ENCODE measurements at regions of chr11 and their contacts with region 1.

Region 1: DNA sequence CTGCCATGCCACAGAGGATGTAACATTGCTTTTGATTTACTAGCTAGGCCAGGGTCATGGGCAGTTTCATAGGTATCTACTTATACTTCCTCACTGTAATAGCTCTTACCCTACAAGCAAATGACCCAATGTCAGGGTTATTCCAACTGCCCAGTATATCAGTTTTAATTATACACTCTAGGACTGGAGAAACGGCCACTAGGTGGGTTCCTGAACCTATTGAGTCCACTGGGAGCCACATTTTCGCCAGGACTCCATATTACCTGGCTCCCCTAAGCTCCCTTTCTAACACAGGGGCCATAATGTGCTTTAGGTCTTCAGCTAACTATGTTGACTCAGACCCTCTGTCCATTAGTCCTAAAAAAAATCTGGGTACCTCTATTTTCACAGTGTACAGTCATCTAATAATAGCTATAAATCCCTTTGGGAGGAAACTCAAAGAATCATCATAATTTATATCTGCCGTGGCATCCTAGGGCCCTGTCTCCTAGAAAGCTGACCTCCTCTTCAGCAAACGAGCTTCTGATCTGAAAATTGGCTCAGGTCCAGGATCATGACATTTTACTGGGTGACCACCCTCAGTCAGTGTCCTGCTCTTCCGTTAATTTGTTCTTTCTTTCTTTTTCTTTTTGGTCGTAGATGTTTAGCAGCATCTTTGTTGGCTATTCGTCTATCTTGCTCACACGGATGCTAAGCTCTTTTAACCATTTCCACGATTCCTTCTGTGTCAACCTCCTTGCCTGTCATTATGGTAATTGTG is 244.3 kb downstream of the FAM76B start:
- DNase-seq: no peak
- H3K4me3 ChIP-seq: no peak overlapping the region
- H3K27ac ChIP-seq: no peak overlapping the region
- H3K4me1 ChIP-seq: no peaks in the 10 kb centered on the region
- H3K27me3 ChIP-seq: no peaks in the 10 kb centered on the region
- CTCF ChIP-seq: peak in 2 of 3 experiments; percentile 20 to 34; a peak in 2 of 4 replicates
- EP300 ChIP-seq: no peak
- POLR2A ChIP-seq: no peak
- RAD21 ChIP-seq: peak; percentile 21 to 47; a peak in 3 of 4 replicates

Region 2: GRCh38 chr11:95556342-95557163 is 11.3 kb after region 1 on chr11:
- CTCF ChIA-PET with region 1: interaction called, 27 read pairs
- POLR2A ChIA-PET with region 1: no interaction called
- DNase-seq: no peak
- H3K4me3 ChIP-seq: no peak overlapping the region
- H3K27ac ChIP-seq: no peak overlapping the region; the same call in 1 of the 2 replicates
- H3K4me1 ChIP-seq: peaks cover 3 to 7% (median 5%) of the 10 kb centered on the region in 4 experiments; a peak in 4 of 7 replicates
- H3K27me3 ChIP-seq: no peaks in the 10 kb centered on the region
- CTCF ChIP-seq: no peak
- EP300 ChIP-seq: no peak
- POLR2A ChIP-seq: no peak
- RAD21 ChIP-seq: no peak

Region 3: GRCh38 chr11:95563173-95563572 is 17.9 kb after region 1 on chr11:
- CTCF ChIA-PET with region 1: interaction called, 27 read pairs
- POLR2A ChIA-PET with region 1: no interaction called
- DNase-seq: no peak
- H3K4me3 ChIP-seq: no peak overlapping the region
- H3K27ac ChIP-seq: no peak overlapping the region
- H3K4me1 ChIP-seq: no peaks in the 10 kb centered on the region; a peak in 1 of 7 replicates
- H3K27me3 ChIP-seq: no peaks in the 10 kb centered on the region
- CTCF ChIP-seq: no peak
- EP300 ChIP-seq: no peak
- POLR2A ChIP-seq: no peak
- RAD21 ChIP-seq: no peak

Measured in H1 (cell line).